Mammary epithelial cell (primary cell): ENCODE measurements at regions of chr9 and their contacts with region 1.

Region 1: DNA sequence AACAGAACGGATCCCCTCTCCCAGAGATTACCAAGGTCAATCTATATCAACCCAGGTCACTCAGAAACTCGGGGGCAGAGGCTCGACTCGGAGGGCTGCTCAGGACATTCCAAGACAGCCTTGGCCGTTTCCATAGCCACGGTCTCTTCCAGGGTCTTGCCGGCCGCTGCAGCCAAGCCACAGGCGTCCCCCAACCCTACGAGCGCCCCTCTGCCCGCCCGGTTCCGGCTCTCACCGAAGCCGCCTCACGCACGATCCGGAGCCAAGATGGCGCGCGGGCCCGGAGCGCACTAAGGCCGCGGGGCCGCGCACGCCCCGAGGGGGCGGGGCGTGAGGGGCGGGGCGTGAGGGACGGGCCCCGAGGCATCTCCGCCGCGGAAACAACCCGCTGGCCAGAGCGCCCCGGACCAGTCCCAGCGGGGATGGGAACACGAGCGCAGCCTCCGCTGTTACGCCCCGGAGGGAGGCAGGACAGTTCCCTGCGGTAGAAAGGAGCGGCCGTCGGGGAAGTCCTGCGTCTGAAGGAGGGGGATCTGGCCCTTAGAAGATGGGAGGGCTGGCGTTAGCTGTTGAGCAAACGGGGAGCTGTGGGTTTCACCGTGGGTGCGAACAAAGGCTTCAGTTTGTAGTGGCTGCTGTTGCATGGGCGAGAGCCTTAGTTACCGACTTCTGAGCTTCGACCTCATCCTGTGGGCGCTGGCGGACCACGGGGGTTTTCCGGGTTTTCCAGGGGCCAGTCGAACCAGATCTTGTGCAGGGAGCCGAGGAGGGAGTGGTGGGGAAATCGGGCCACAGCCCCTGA is at the start of gene RPP25L:
- DNase-seq: peak; percentile 86
- H3K4me3 ChIP-seq: peak within 1 kb of the TSS; percentile 79 to 84 (median 82)
- H3K27ac ChIP-seq: peak within 1 kb of the TSS; percentile 82
- H3K4me1 ChIP-seq: peaks cover 20% of the 10 kb centered on the region
- H3K27me3 ChIP-seq: no peaks in the 10 kb centered on the region
- CTCF ChIP-seq: no peak
- total RNA-seq, gene RPP25L: 12.5 to 31.7 TPM

Region 2: DNA sequence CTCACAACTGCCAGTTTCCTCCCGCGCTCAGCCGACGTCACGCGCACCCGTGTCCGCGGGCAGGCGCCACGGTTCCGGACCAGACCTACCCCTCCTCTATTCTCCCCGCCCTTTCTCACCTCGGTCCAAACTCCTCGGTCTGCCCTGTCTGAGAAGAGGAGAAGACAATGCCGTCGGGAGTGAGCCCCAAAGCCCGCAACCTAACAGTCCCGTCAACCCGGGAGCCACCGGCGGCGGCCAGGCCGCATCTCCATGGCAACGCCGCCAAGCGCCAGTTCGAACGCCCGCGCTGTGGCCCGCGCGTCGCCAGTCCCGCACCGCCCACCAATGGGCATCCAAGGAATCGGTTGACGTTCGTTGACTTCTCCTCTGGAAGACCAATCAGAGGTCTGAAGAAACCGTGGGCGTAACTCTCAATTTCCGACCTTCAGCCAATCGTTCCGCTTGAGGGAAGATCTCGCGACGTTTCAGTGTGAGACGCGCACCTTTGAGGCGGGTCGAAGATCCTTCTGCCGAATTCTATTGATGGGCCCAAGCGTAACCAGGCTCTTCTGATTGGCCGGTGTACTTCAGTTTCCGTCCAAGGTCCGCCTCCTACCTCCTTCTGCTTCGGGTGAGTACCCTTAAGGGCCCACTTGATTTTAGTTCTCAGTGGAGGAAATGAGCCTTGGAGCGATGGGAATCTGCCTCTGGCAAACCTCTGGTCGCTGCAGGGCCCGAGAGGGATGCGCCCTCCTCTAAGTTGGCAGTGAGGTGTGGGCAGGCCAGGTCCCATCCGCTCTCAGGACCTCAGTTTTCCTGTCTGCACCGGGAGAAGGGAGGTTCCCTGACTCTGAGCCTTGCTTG is 282.8 kb before region 1 on chr9 and contains the starts of genes KIF24 and NUDT2:
- CTCF ChIA-PET with region 1: no interaction called
- dilution Hi-C with region 1: loop called (anchors 10 kb)
- in situ Hi-C with region 1: no loop called
- intact Hi-C with region 1: no loop called
- DNase-seq: peak; percentile 100
- H3K4me3 ChIP-seq: peak within 1 kb of the TSS; percentile 85 to 89 (median 86)
- H3K27ac ChIP-seq: peak within 1 kb of the TSS; percentile 96
- H3K4me1 ChIP-seq: peaks cover 45% of the 10 kb centered on the region
- H3K27me3 ChIP-seq: no peaks in the 10 kb centered on the region
- CTCF ChIP-seq: no peak
- total RNA-seq, gene KIF24: 1.3 to 3.9 TPM
- total RNA-seq, gene NUDT2: 17.8 to 22.9 TPM

Region 3: GRCh38 chr9:34570376-34570775 is 41.7 kb before region 1 on chr9:
- CTCF ChIA-PET with region 1: no interaction called
- dilution Hi-C with region 1: loop called (anchors 5 kb)
- in situ Hi-C with region 1: no loop called
- intact Hi-C with region 1: no loop called
- DNase-seq: no peak
- H3K4me3 ChIP-seq: no peak overlapping the region
- H3K27ac ChIP-seq: no peak overlapping the region
- H3K4me1 ChIP-seq: no peaks in the 10 kb centered on the region
- H3K27me3 ChIP-seq: peaks cover 5% of the 10 kb centered on the region
- CTCF ChIP-seq: no peak

Region 4: GRCh38 chr9:34637356-34638137 is 25.5 kb after region 1 on chr9 and contains the start of gene SIGMAR1:
- CTCF ChIA-PET with region 1: interaction called, 3 read pairs
- dilution Hi-C with region 1: no loop called
- in situ Hi-C with region 1: no loop called
- intact Hi-C with region 1: loop called (anchors 1 kb)
- DNase-seq: peak; percentile 94
- H3K4me3 ChIP-seq: peak within 1 kb of the TSS; percentile 62 to 91 (median 88)
- H3K27ac ChIP-seq: peak within 1 kb of the TSS; percentile 35
- H3K4me1 ChIP-seq: peaks cover 4% of the 10 kb centered on the region
- H3K27me3 ChIP-seq: no peaks in the 10 kb centered on the region
- CTCF ChIP-seq: no peak
- total RNA-seq, gene SIGMAR1: 83.0 to 131 TPM

Region 5: GRCh38 chr9:34665381-34666250 is 53.6 kb after region 1 on chr9:
- CTCF ChIA-PET with region 1: no interaction called
- dilution Hi-C with region 1: loop called (anchors 5 kb)
- in situ Hi-C with region 1: no loop called
- intact Hi-C with region 1: loop called (anchors 2 kb)
- DNase-seq: peak; percentile 89
- H3K4me3 ChIP-seq: peak overlapping the region; percentile 52 to 90 (median 66)
- H3K27ac ChIP-seq: peak overlapping the region; percentile 93
- H3K4me1 ChIP-seq: peaks cover 32% of the 10 kb centered on the region
- H3K27me3 ChIP-seq: no peaks in the 10 kb centered on the region
- CTCF ChIP-seq: no peak

Region 6: GRCh38 chr9:34710023-34710422 is 98.0 kb after region 1 on chr9 and contains the start of gene CCL21:
- CTCF ChIA-PET with region 1: no interaction called
- dilution Hi-C with region 1: no loop called
- in situ Hi-C with region 1: no loop called
- intact Hi-C with region 1: no loop called
- DNase-seq: no peak
- H3K4me3 ChIP-seq: no peak within 1 kb of the TSS
- H3K27ac ChIP-seq: no peak within 1 kb of the TSS
- H3K4me1 ChIP-seq: no peaks in the 10 kb centered on the region
- H3K27me3 ChIP-seq: no peaks in the 10 kb centered on the region
- CTCF ChIP-seq: no peak
- total RNA-seq, gene CCL21: not detected